Thyroid gland (tissue), 4 donors: ENCODE measurements at regions of chr11 and their contacts with region 1.

Region 1: GRCh38 chr11:112289588-112290492 is 29.2 kb upstream of the PLET1 start:
- DNase-seq: peak; percentile 82
- H3K4me3 ChIP-seq: peak overlapping the region; percentile 9 to 36 (median 12)
- H3K27ac ChIP-seq: no peak overlapping the region
- H3K4me1 ChIP-seq: peaks cover 8 to 26% of the 10 kb centered on the region in 2 donors
- H3K27me3 ChIP-seq: no peaks in the 10 kb centered on the region
- CTCF ChIP-seq: peak; percentile 46 to 97 (median 84)
- POLR2A ChIP-seq: peak in 1 of 2 donors; percentile 53

Region 2: DNA sequence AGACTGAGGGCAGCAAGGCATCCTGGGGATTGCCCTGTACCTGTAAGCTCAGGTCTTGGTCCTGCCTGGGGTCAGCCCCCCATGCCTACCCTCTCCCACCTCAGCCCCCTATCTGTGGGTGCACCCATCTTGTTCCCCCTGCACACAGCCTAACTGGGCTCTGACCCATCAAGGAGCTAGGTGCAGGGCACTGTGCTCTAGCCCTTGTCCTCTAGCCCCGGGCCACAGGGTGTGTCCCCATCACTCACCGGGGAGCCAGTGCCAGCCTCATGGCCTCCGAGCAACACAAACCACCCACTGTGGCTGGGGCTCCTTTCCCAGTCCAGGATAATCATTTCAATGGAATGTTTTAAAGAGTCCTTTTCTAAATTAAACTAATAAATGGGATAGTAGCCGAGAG is 264.7 kb after region 1 on chr11:
- intact Hi-C with region 1: loop called (anchors 5 kb)
- DNase-seq: no peak
- H3K4me3 ChIP-seq: no peak overlapping the region
- H3K27ac ChIP-seq: no peak overlapping the region
- H3K4me1 ChIP-seq: no peaks in the 10 kb centered on the region
- H3K27me3 ChIP-seq: no peaks in the 10 kb centered on the region
- CTCF ChIP-seq: no peak
- POLR2A ChIP-seq: no peak